ENCODE measurements at regions of chr19 and their contacts with region 1.

Region 1: DNA sequence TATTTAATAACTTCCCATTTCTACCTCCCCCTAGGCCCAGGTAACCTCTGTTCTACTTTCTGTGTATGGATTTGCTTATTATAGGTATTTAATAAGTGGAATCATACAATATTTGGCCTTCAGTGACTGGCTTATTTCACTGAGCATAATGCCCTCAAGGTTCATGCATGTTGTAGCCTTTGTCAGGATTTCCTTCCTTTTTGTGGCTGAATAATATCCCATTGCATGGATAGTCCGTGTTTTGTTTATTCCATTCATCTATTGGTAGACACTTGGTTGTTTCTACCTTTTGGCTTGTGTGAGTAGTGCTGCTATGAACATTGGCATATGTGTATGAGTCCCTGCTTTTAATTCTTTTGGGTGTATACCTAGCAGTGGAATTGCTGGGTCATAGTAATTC is 9.4 kb downstream of the HNRNPM start:
- DNase-seq: no peak
- ATAC-seq: no peak
- H3K4me3 ChIP-seq: no peak overlapping the region
- H3K4me3 Mint-ChIP-seq: peak overlapping the region in 1 of 3 donors; percentile 51
- H3K27ac ChIP-seq: no peak overlapping the region
- H3K27ac Mint-ChIP-seq: no peak overlapping the region
- H3K4me1 ChIP-seq: peaks cover 22 to 60% of the 10 kb centered on the region in 2 experiments
- H3K4me1 Mint-ChIP-seq: peaks cover 83 to 95% (median 93%) of the 10 kb centered on the region in 3 donors
- H3K27me3 ChIP-seq: no peaks in the 10 kb centered on the region
- H3K27me3 Mint-ChIP-seq: no peaks in the 10 kb centered on the region

Region 2: DNA sequence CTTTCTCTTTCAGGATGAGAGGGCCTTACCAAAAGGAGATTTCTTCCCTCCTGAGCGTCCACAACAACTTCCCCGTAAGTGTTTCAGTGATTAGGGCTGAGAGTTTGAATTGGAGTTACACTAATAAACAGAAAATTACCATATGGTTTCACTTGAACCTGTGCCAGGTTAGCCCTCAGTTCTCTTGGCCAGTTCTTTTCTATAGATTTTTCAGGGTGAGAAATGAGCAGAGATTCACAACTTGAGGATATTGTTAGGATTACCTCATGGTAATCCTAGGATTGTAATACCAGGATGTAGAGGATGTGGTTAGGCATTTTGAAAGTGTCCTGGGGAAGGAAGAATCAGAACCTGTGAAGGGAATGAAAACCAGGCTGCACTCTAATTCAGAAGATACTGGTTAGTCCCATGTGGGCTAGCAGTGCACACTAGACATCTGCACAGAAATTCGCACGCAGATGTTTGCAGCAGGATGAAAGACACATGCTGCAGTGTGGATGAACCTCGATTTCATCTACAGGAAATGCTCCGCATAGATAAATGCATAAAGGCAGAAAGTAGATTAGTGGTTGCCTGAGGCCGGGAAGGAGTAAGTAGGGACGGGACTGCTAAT is 14.6 kb after region 1 on chr19:
- CTCF ChIA-PET with region 1: no interaction called
- POLR2A ChIA-PET with region 1: interaction called, 3 to 12 read pairs
- DNase-seq: no peak
- ATAC-seq: no peak
- H3K4me3 ChIP-seq: no peak overlapping the region
- H3K4me3 Mint-ChIP-seq: no peak overlapping the region
- H3K27ac ChIP-seq: no peak overlapping the region
- H3K27ac Mint-ChIP-seq: peak overlapping the region; percentile 36 to 65
- H3K4me1 ChIP-seq: no peaks in the 10 kb centered on the region
- H3K4me1 Mint-ChIP-seq: peaks cover 27 to 38% (median 28%) of the 10 kb centered on the region in 3 donors
- H3K27me3 ChIP-seq: no peaks in the 10 kb centered on the region
- H3K27me3 Mint-ChIP-seq: no peaks in the 10 kb centered on the region

Region 3: GRCh38 chr19:8494158-8494557 is 39.9 kb after region 1 on chr19:
- CTCF ChIA-PET with region 1: no interaction called
- POLR2A ChIA-PET with region 1: no interaction called
- DNase-seq: peak in 2 of 35 experiments; percentile 27 to 28
- ATAC-seq: peak; percentile 24 to 71 (median 50)
- H3K4me3 ChIP-seq: peak overlapping the region in 1 of 2 donors; percentile 20
- H3K4me3 Mint-ChIP-seq: peak overlapping the region in 1 of 3 donors; percentile 34
- H3K27ac ChIP-seq: peak overlapping the region; percentile 38
- H3K27ac Mint-ChIP-seq: peak overlapping the region; percentile 69 to 84
- H3K4me1 ChIP-seq: peaks cover 12 to 27% of the 10 kb centered on the region in 2 experiments
- H3K4me1 Mint-ChIP-seq: peaks cover 18 to 25% (median 22%) of the 10 kb centered on the region in 3 donors
- H3K27me3 ChIP-seq: no peaks in the 10 kb centered on the region
- H3K27me3 Mint-ChIP-seq: no peaks in the 10 kb centered on the region